ENCODE measurements at regions of chr2 and their contacts with region 1.

Region 1: GRCh38 chr2:37656512-37657423 is 14.7 kb downstream of the CDC42EP3 start:
- DNase-seq: peak in 1 of 2 experiments; percentile 70
- H3K4me3 ChIP-seq: peak overlapping the region in 1 of 4 experiments; percentile 29; a peak in 2 of 8 replicates
- H3K27ac ChIP-seq: peak overlapping the region; percentile 13; the same call in 1 of the 2 replicates
- H3K4me1 ChIP-seq: peaks cover 17 to 42% (median 40%) of the 10 kb centered on the region in 4 experiments
- H3K27me3 ChIP-seq: no peaks in the 10 kb centered on the region; a peak in 1 of 7 replicates
- CTCF ChIP-seq: no peak
- EP300 ChIP-seq: peak in 1 of 2 experiments; percentile 83; a peak in 1 of 3 replicates
- POLR2A ChIP-seq: 0 out of 3 replicates have a peak, but pooled peaks of 1 of the 2 experiments have one; percentile 7
- RAD21 ChIP-seq: no peak

Region 2: GRCh38 chr2:37672104-37672869 is 15.5 kb after region 1 on chr2:
- CTCF ChIA-PET with region 1: interaction called, 5 read pairs
- POLR2A ChIA-PET with region 1: interaction called, 18 read pairs
- DNase-seq: peak; percentile 91 to 94
- H3K4me3 ChIP-seq: peak overlapping the region; percentile 77 to 98 (median 82)
- H3K27ac ChIP-seq: peak overlapping the region; percentile 65
- H3K4me1 ChIP-seq: peaks cover 2 to 17% (median 11%) of the 10 kb centered on the region in 4 experiments; a peak in 6 of 7 replicates
- H3K27me3 ChIP-seq: no peaks in the 10 kb centered on the region
- CTCF ChIP-seq: no peak
- EP300 ChIP-seq: no peak
- POLR2A ChIP-seq: no peak
- RAD21 ChIP-seq: peak; percentile 2 to 25; a peak in 3 of 4 replicates